Endothelial cell of umbilical vein (primary cell): ENCODE measurements at regions of chr9 and their contacts with region 1.

Region 1: DNA sequence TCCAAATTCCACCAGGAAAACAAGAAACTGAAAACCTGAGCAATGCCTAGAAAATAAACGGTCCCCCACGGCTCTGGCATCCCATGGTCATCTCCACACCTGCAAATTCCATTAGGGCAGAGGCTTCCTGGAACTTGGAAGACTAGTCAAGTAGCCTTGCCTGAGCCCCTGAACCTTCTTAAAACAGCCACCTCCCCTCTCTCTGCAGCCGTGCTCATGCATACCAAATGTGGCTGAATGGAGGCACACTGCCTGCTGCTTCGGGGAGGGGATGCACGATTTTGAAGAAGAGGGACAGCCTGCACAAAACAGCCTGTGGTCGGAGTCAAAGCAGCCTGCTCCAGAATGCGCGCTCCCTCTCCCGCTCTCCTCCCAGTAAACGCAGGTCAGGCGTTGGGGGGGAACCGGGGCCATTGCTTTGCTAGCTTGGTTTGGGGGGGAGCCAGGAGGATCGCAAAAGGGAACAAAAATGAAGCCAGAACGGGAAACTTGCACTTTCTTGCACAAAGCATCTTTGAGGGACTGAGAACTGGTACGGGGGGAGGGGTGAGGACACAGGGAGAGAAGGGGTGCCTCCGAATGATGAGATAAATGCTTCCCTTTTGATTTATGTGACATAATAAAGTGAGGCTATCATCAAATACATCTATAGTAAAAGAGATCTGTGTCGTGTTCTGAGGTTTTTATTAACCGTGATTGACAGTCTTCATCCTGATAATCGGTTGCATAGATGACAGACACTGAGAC is at the start of gene TRPM3:
- DNase-seq: no peak
- H3K4me3 ChIP-seq: no peak within 1 kb of the TSS
- H3K27ac ChIP-seq: no peak within 1 kb of the TSS
- H3K4me1 ChIP-seq: no peaks in the 10 kb centered on the region
- H3K27me3 ChIP-seq: peaks cover 19 to 52% of the 10 kb centered on the region in 2 experiments
- CTCF ChIP-seq: no peak
- POLR2A ChIP-seq: no peak
- total RNA-seq, gene TRPM3: 0.02 and 0.33 TPM in 2 replicates

Region 2: DNA sequence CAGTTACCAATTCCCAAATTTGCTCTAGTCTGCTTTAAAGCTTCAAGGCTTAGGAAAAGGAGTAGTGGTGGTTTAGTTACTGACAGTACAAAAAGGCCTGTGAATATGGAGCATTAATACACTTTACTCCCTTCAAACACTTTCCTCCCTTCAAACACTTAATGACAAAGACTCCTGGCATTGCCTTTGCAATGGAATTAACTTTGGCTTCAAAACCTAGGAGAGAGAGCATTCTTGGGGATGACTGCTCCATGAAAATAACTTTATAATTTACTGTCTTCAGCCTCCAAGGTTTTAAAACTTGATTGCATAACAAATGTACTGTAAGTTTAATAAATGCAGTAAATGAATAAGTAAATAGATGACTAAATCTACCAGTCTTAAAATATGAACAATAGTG is 185.6 kb before region 1 on chr9:
- CTCF ChIA-PET with region 1: no interaction called
- POLR2A ChIA-PET with region 1: no interaction called
- dilution Hi-C with region 1: no loop called
- intact Hi-C with region 1: loop called (anchors 10 kb)
- DNase-seq: no peak
- H3K4me3 ChIP-seq: no peak overlapping the region
- H3K27ac ChIP-seq: no peak overlapping the region
- H3K4me1 ChIP-seq: no peaks in the 10 kb centered on the region
- H3K27me3 ChIP-seq: peaks cover 6 to 13% of the 10 kb centered on the region in 2 experiments
- CTCF ChIP-seq: no peak
- POLR2A ChIP-seq: no peak

Region 3: DNA sequence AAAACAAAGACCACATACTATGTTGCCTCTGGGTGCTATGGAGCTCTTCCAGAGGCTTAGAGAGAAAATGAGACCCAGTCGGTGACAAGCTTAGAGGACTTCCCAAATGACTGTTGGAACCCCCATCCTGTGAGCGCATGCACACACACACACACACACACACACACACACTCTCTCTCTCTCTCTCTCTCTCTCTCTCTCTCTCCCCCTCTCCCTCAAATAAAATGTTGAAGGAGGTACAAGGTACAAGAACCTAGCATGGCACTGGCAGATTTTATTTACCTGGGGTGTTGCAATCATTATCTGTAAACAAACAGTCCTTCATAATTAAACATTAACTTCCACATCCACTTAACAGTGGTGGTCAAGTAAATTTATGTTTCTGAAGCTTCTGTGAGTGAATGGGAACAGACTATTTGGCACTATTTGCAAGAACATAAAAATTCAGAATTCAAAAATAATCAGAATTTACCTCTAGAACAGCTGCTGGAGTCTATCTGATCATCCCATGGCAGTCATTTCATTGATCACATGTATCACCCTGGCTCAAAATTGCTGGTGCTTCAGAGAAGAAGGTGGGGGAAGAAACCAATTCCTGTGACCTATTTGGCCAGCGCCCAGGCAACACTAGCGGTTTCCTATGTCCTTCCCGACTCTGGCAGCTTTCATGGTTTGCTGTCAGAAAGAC is 24.9 kb before region 1 on chr9:
- CTCF ChIA-PET with region 1: no interaction called
- POLR2A ChIA-PET with region 1: no interaction called
- dilution Hi-C with region 1: no loop called
- intact Hi-C with region 1: no loop called
- DNase-seq: no peak
- H3K4me3 ChIP-seq: no peak overlapping the region
- H3K27ac ChIP-seq: no peak overlapping the region
- H3K4me1 ChIP-seq: no peaks in the 10 kb centered on the region
- H3K27me3 ChIP-seq: no peaks in the 10 kb centered on the region
- CTCF ChIP-seq: no peak
- POLR2A ChIP-seq: no peak

Region 4: DNA sequence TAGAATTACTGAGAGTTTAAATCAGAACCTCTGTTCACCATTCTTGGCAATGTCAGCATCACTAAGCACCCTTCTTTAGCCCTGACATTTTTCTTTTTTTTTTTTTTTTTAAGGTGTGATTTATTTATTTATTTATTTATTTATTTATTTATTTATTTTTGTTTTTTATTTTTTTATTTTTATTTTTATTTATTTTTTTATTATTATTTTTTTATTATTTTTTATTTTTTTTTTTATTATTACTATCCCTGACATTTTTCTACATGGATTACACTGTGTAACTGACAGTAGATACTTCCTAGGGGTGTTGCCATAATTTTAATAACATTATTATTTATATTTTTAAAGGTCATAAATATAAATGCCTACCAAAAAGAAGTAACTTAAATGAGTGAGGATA is 47.0 kb after region 1 on chr9:
- CTCF ChIA-PET with region 1: no interaction called
- POLR2A ChIA-PET with region 1: no interaction called
- dilution Hi-C with region 1: no loop called
- intact Hi-C with region 1: loop called (anchors 5 kb)
- DNase-seq: no peak
- H3K4me3 ChIP-seq: no peak overlapping the region
- H3K27ac ChIP-seq: no peak overlapping the region
- H3K4me1 ChIP-seq: no peaks in the 10 kb centered on the region
- H3K27me3 ChIP-seq: peaks cover 0 to 3% of the 10 kb centered on the region in 2 experiments
- CTCF ChIP-seq: no peak
- POLR2A ChIP-seq: no peak